ENCODE measurements at regions of chr17 and their contacts with region 1.

Region 1: GRCh38 chr17:9239793-9240658 is 218.7 kb downstream of the NTN1 start:
- ATAC-seq: peak; percentile 52 to 84 (median 73)
- H3K4me3 ChIP-seq: peak overlapping the region; percentile 13 to 32 (median 22)
- H3K27ac ChIP-seq: peak overlapping the region; percentile 77 to 94
- H3K4me1 ChIP-seq: peaks cover 61 to 63% of the 10 kb centered on the region in 2 donors

Region 2: GRCh38 chr17:9021158-9021991 is 218.7 kb before region 1 on chr17 and contains the start of gene NTN1:
- in situ Hi-C with region 1: loop called in 1 of 9 experiments (anchors 25 kb)
- ATAC-seq: peak; percentile 62 to 82 (median 77)
- H3K4me3 ChIP-seq: peak within 1 kb of the TSS; percentile 48 to 84 (median 49)
- H3K27ac ChIP-seq: peak within 1 kb of the TSS in 1 of 2 donors; percentile 6
- H3K4me1 ChIP-seq: peaks cover 11 to 20% of the 10 kb centered on the region in 2 donors
- total RNA-seq, gene NTN1: 8.0 to 491 (median 16.4) TPM

Region 3: GRCh38 chr17:9346296-9346926 is 106.4 kb after region 1 on chr17:
- in situ Hi-C with region 1: loop called in 1 of 9 experiments (anchors 25 kb)
- ATAC-seq: no peak
- H3K4me3 ChIP-seq: no peak overlapping the region
- H3K27ac ChIP-seq: no peak overlapping the region
- H3K4me1 ChIP-seq: peaks cover 6 to 7% of the 10 kb centered on the region in 2 donors

Region 4: DNA sequence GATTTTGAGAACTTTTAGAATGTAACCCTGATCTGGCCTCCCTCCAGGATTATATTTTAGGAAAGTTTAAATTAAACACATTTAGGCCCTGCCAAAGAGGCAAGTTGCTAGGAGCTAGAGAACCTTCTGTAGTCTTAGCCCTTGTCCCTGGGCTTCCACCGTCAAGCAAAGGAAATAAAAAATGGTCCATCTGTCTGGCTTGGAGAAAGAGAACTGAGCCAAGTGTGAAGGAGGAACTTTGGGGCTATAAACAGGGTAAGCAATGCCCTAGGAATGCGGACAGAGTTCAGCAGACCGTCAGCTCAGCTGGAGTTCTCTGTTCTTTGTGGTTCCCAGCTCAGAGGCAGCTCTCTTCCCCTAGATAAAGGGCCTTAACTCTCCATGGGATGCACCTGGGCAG is 635.4 kb after region 1 on chr17:
- in situ Hi-C with region 1: no loop called
- ATAC-seq: no peak
- H3K4me3 ChIP-seq: no peak overlapping the region
- H3K27ac ChIP-seq: no peak overlapping the region
- H3K4me1 ChIP-seq: no peaks in the 10 kb centered on the region

Measured in motor neuron (in vitro differentiated cells).